Adrenal gland (tissue), 19 donors: ENCODE measurements at regions of chr15 and their contacts with region 1.

Region 1: DNA sequence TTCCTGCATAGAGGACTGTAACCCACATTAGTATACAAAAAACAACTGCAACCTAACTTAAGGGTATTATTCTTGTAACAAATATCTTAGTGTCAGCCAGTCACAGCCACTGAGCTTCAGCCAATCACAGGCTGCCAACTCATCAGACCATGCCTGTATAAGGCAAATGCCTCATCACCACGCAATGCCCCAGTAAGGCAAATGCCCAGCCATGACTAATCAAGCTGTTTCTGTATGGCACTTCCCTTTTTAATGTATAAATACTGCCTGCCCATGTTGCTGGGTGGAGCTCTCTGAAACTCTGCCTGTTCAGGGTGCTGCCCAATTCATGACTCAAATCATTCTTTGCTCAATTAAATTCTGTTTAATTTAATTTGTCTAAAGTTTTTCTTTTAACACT is 18.4 kb upstream of the GABRA5 start:
- DNase-seq: no peak
- H3K4me3 ChIP-seq: no peak overlapping the region
- H3K27ac ChIP-seq: no peak overlapping the region
- H3K4me1 ChIP-seq: no peaks in the 10 kb centered on the region
- H3K27me3 ChIP-seq: no peaks in the 10 kb centered on the region
- CTCF ChIP-seq: no peak
- POLR2A ChIP-seq: no peak

Region 2: GRCh38 chr15:26901041-26901440 is 52.5 kb after region 1 on chr15:
- intact Hi-C with region 1: loop called in 1 of 2 experiments (anchors 10 kb)
- DNase-seq: no peak
- H3K4me3 ChIP-seq: no peak overlapping the region
- H3K27ac ChIP-seq: no peak overlapping the region
- H3K4me1 ChIP-seq: no peaks in the 10 kb centered on the region
- H3K27me3 ChIP-seq: no peaks in the 10 kb centered on the region
- CTCF ChIP-seq: no peak
- POLR2A ChIP-seq: no peak

Region 3: GRCh38 chr15:27028858-27029477 is 180.5 kb after region 1 on chr15:
- intact Hi-C with region 1: no loop called
- DNase-seq: no peak
- H3K4me3 ChIP-seq: no peak overlapping the region
- H3K27ac ChIP-seq: no peak overlapping the region
- H3K4me1 ChIP-seq: no peaks in the 10 kb centered on the region
- H3K27me3 ChIP-seq: no peaks in the 10 kb centered on the region
- CTCF ChIP-seq: no peak
- POLR2A ChIP-seq: no peak

Region 4: GRCh38 chr15:27165583-27165982 is 317.1 kb after region 1 on chr15:
- intact Hi-C with region 1: no loop called
- DNase-seq: no peak
- H3K4me3 ChIP-seq: no peak overlapping the region
- H3K27ac ChIP-seq: no peak overlapping the region
- H3K4me1 ChIP-seq: no peaks in the 10 kb centered on the region
- H3K27me3 ChIP-seq: no peaks in the 10 kb centered on the region
- CTCF ChIP-seq: no peak
- POLR2A ChIP-seq: no peak

Region 5: GRCh38 chr15:27260523-27260922 is 412.0 kb after region 1 on chr15:
- intact Hi-C with region 1: no loop called
- DNase-seq: no peak
- H3K4me3 ChIP-seq: no peak overlapping the region
- H3K27ac ChIP-seq: no peak overlapping the region
- H3K4me1 ChIP-seq: no peaks in the 10 kb centered on the region
- H3K27me3 ChIP-seq: no peaks in the 10 kb centered on the region
- CTCF ChIP-seq: no peak
- POLR2A ChIP-seq: no peak

Region 6: DNA sequence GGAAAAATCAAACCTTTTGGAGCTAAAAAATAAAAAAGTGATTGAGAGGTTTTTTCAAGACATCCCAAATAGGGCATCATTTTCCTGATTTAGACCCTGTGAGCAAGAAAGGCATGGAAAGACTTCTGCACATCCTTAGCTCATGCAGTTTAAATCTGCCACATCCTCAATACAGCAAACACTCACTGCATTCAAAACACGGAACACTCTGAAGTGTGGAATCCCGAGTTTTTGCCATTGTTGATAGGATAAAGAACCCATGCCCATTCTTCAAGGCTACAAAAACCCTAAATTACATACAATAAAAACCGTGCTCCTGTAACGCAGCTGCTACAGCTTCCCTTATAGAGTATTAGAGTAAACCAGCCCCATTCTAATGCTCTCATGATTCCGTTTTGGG is 469.2 kb after region 1 on chr15:
- intact Hi-C with region 1: no loop called
- DNase-seq: no peak
- H3K4me3 ChIP-seq: no peak overlapping the region
- H3K27ac ChIP-seq: no peak overlapping the region
- H3K4me1 ChIP-seq: no peaks in the 10 kb centered on the region
- H3K27me3 ChIP-seq: no peaks in the 10 kb centered on the region
- CTCF ChIP-seq: no peak
- POLR2A ChIP-seq: no peak